ENCODE measurements at regions of chr18 and their contacts with region 1.

Region 1: DNA sequence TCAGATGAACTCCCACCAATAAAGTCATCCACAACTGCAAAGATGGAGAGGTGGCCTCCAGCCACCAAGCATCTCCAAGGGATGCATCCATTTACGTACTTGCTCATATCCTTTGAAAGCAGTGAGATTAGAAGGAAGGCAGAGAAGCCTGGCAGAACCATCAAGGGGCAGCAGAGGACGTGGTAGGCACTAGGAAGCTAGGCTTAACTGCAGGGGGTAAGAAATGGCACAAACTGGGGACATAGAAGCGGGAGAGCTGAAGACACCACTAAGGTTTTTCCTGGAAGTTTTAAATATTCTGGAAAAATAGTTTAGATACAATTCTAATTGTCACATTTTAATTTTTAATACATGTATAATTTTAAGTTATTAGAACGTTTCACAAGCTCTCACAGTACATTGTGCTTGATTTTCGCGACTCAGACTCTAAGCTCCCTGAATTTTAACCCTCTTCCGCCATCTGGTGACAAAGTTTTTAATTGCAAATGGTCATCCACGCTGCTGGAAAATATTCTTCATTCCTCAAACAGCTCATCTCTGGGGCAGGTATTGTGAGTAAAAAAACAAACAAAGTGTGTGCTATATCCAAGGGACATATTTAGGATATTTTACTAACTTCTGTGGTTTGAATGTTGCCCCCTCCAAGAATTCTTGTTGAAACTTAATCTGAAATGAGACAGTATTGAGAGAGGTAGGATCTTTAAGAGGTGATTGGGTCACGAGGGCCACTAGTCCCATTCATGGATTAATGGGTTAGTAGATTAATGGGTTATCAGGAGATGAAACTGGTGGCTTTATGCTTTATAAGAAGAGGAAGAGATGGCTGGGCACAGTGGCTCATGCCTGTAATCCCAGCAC is 1.6 kb upstream of the PSTPIP2 start:
- DNase-seq: no peak
- ATAC-seq: peak in 3 of 4 donors; percentile 38 to 49 (median 42)
- H3K4me3 ChIP-seq: no peak overlapping the region
- H3K27ac ChIP-seq: no peak overlapping the region
- H3K4me1 ChIP-seq: peaks cover 0 to 45% (median 19%) of the 10 kb centered on the region in 12 donors
- H3K27me3 ChIP-seq: no peaks in the 10 kb centered on the region
- CTCF ChIP-seq: peak; percentile 45 to 78 (median 65)
- POLR2A ChIP-seq: no peak

Region 2: DNA sequence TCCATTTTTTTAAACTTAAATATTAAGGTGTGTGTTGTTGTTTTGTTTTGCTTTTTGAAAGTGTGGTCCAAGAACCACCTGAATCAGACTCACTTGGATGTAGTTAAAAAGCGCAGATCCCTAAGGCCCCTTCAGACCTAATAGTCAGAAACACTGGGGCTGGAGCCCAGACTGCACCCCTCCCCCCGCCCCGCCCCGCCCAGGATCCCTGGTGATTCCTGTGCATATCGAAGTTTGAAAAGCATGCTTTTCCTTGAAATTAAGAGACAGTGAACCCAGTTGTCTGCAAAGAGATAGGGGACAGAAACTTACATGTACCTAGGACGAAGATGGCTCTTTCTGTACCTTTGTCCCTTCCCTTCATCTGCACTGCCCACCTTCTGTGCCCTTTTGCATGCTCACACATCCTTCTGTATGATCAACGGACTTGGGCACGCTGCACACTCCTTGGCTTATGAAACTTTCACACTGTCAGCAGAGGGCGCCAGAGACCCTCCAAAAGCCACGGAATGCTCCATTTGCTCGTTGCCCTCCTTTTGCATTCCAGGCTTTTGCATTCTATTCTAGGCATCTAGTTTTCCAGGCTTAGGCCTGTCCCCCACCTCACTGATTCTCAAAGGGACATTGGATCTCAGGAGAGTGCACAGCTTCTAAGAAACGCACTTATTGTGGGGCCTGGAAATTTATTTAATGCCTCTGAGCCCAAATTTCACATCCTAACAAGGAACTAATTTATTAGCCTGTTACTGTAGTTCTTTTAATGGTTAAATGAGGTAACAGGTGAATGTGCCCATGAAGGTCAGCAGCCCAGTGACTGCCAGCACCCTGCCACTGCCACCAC is 382.5 kb before region 1 on chr18:
- intact Hi-C with region 1: loop called in 5 of 10 experiments (anchors 5 to 10 kb)
- DNase-seq: peak; percentile 67 to 84 (median 74)
- ATAC-seq: peak in 3 of 4 donors; percentile 88 to 92 (median 90)
- H3K4me3 ChIP-seq: no peak overlapping the region
- H3K27ac ChIP-seq: no peak overlapping the region
- H3K4me1 ChIP-seq: peaks cover 0 to 27% (median 0%) of the 10 kb centered on the region in 12 donors
- H3K27me3 ChIP-seq: peaks cover 0 to 6% (median 0%) of the 10 kb centered on the region in 9 donors
- CTCF ChIP-seq: peak; percentile 76 to 88 (median 82)
- POLR2A ChIP-seq: no peak

Region 3: GRCh38 chr18:45935591-45936335 is 137.9 kb before region 1 on chr18:
- intact Hi-C with region 1: loop called in 1 of 10 experiments (anchors 10 kb)
- DNase-seq: no peak
- ATAC-seq: no peak
- H3K4me3 ChIP-seq: no peak overlapping the region
- H3K27ac ChIP-seq: no peak overlapping the region
- H3K4me1 ChIP-seq: peaks cover 0 to 14% (median 0%) of the 10 kb centered on the region in 12 donors
- H3K27me3 ChIP-seq: no peaks in the 10 kb centered on the region
- CTCF ChIP-seq: no peak
- POLR2A ChIP-seq: no peak

Region 4: GRCh38 chr18:45967007-45967706 is 106.5 kb before region 1 on chr18 and contains the start of gene EPG5:
- intact Hi-C with region 1: loop called in 7 of 10 experiments (anchors 2 to 10 kb)
- DNase-seq: peak; percentile 95 to 97 (median 96)
- ATAC-seq: peak; percentile 99 to 100 (median 100)
- H3K4me3 ChIP-seq: peak within 1 kb of the TSS; percentile 52 to 96 (median 80)
- H3K27ac ChIP-seq: peak within 1 kb of the TSS in 11 of 12 donors; percentile 32 to 80 (median 66)
- H3K4me1 ChIP-seq: peaks cover 0 to 40% (median 16%) of the 10 kb centered on the region in 12 donors
- H3K27me3 ChIP-seq: no peaks in the 10 kb centered on the region
- CTCF ChIP-seq: no peak
- POLR2A ChIP-seq: peak in 1 of 2 donors; percentile 61
- total RNA-seq, gene EPG5: 14.4 to 37.8 (median 23.8) TPM

Region 5: GRCh38 chr18:46019941-46020340 is 53.8 kb before region 1 on chr18:
- intact Hi-C with region 1: no loop called
- DNase-seq: no peak
- ATAC-seq: no peak
- H3K4me3 ChIP-seq: no peak overlapping the region
- H3K27ac ChIP-seq: no peak overlapping the region
- H3K4me1 ChIP-seq: peaks cover 0 to 8% (median 0%) of the 10 kb centered on the region in 12 donors
- H3K27me3 ChIP-seq: no peaks in the 10 kb centered on the region
- CTCF ChIP-seq: no peak
- POLR2A ChIP-seq: no peak

Region 6: GRCh38 chr18:46134920-46135675 is 61.4 kb after region 1 on chr18:
- intact Hi-C with region 1: no loop called
- DNase-seq: peak in 4 of 5 donors; percentile 29 to 47 (median 39)
- ATAC-seq: peak; percentile 83 to 96 (median 94)
- H3K4me3 ChIP-seq: no peak overlapping the region
- H3K27ac ChIP-seq: peak overlapping the region in 8 of 12 donors; percentile 27 to 71 (median 42)
- H3K4me1 ChIP-seq: peaks cover 0 to 12% (median 0%) of the 10 kb centered on the region in 12 donors
- H3K27me3 ChIP-seq: no peaks in the 10 kb centered on the region
- CTCF ChIP-seq: no peak
- POLR2A ChIP-seq: no peak

Measured in heart left ventricle (tissue), 16 donors.